ENCODE measurements at regions of chr6 and their contacts with region 1.

Region 1: GRCh38 chr6:84967389-84967788 is 203.0 kb upstream of the TBX18 start:
- DNase-seq: no peak
- H3K4me3 ChIP-seq: no peak overlapping the region
- H3K27me3 ChIP-seq: no peaks in the 10 kb centered on the region
- CTCF ChIP-seq: peak; percentile 63

Region 2: GRCh38 chr6:84422380-84422968 is 544.9 kb before region 1 on chr6:
- CTCF ChIA-PET with region 1: interaction called, 13 read pairs
- POLR2A ChIA-PET with region 1: no interaction called
- DNase-seq: no peak
- H3K4me3 ChIP-seq: no peak overlapping the region
- H3K27me3 ChIP-seq: no peaks in the 10 kb centered on the region
- CTCF ChIP-seq: peak; percentile 67

Region 3: GRCh38 chr6:84575264-84575663 is 392.1 kb before region 1 on chr6:
- CTCF ChIA-PET with region 1: no interaction called
- POLR2A ChIA-PET with region 1: interaction called, 15 read pairs
- DNase-seq: no peak
- H3K4me3 ChIP-seq: no peak overlapping the region
- H3K27me3 ChIP-seq: no peaks in the 10 kb centered on the region
- CTCF ChIP-seq: no peak

Region 4: GRCh38 chr6:84739866-84740208 is 227.6 kb before region 1 on chr6:
- CTCF ChIA-PET with region 1: no interaction called
- POLR2A ChIA-PET with region 1: no interaction called
- DNase-seq: no peak
- H3K4me3 ChIP-seq: no peak overlapping the region
- H3K27me3 ChIP-seq: no peaks in the 10 kb centered on the region
- CTCF ChIP-seq: no peak

Measured in BJ (cell line).